Activated B cell treated with CpG ODN at 0.5 μM for 24 hours (primary cell): ENCODE measurements at regions of chr12 and their contacts with region 1.

Region 1: GRCh38 chr12:105382771-105383622 is 52.5 kb downstream of the C12orf75 start:
- DNase-seq: no peak
- ATAC-seq: peak; percentile 77
- H3K4me3 Mint-ChIP-seq: no peak overlapping the region
- H3K27ac Mint-ChIP-seq: no peak overlapping the region
- H3K4me1 Mint-ChIP-seq: no peaks in the 10 kb centered on the region
- H3K27me3 Mint-ChIP-seq: no peaks in the 10 kb centered on the region
- CTCF ChIP-seq: no peak

Region 2: GRCh38 chr12:103915306-103915705 is 1467.7 kb before region 1 on chr12:
- CTCF ChIA-PET with region 1: no interaction called
- POLR2A ChIA-PET with region 1: no interaction called
- intact Hi-C with region 1: no loop called
- DNase-seq: no peak
- ATAC-seq: no peak
- H3K4me3 Mint-ChIP-seq: no peak overlapping the region
- H3K27ac Mint-ChIP-seq: no peak overlapping the region
- H3K4me1 Mint-ChIP-seq: no peaks in the 10 kb centered on the region
- H3K27me3 Mint-ChIP-seq: no peaks in the 10 kb centered on the region
- CTCF ChIP-seq: no peak

Region 3: DNA sequence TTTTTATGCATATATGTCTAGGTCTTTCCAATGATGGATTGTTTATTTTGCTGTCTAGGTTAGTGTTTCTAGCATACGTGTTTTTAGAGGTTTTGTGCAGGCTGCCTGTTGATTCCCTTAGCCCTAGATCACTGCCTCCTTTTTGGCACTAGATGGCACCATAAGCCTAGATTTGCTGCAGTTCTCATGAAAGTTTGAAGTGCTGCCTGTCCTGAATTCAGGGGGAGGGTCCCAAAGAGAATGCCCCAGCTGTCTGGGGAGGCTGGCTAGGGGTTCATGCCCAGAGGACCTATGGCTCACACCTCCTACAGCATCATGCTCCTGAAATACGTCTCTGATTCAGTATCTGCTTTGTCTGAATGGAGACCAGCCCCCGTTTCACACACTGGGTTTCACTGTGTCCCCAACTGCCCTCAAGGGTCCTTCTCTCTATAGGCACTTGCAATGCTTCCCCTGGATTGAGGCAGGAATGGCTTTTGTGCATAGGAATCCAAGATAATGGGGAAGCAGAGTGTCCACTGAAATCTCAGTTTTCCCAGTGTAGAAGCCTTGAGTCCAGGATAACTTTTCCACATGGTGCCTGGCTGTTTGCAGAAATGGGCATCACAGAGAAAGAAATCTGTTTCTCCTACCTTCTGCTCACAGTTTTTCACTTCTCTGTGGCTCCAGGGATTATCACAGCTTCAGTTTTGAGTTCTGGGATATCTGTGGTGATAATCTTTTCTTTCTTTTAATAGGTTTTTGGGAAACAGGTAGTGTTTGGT is 1181.6 kb before region 1 on chr12:
- CTCF ChIA-PET with region 1: interaction called, 5 read pairs
- POLR2A ChIA-PET with region 1: no interaction called
- intact Hi-C with region 1: loop called (anchors 1 kb)
- DNase-seq: peak; percentile 20
- ATAC-seq: peak; percentile 62
- H3K4me3 Mint-ChIP-seq: no peak overlapping the region
- H3K27ac Mint-ChIP-seq: no peak overlapping the region
- H3K4me1 Mint-ChIP-seq: peaks cover 2% of the 10 kb centered on the region
- H3K27me3 Mint-ChIP-seq: peaks cover 12% of the 10 kb centered on the region
- CTCF ChIP-seq: peak; percentile 31

Region 4: DNA sequence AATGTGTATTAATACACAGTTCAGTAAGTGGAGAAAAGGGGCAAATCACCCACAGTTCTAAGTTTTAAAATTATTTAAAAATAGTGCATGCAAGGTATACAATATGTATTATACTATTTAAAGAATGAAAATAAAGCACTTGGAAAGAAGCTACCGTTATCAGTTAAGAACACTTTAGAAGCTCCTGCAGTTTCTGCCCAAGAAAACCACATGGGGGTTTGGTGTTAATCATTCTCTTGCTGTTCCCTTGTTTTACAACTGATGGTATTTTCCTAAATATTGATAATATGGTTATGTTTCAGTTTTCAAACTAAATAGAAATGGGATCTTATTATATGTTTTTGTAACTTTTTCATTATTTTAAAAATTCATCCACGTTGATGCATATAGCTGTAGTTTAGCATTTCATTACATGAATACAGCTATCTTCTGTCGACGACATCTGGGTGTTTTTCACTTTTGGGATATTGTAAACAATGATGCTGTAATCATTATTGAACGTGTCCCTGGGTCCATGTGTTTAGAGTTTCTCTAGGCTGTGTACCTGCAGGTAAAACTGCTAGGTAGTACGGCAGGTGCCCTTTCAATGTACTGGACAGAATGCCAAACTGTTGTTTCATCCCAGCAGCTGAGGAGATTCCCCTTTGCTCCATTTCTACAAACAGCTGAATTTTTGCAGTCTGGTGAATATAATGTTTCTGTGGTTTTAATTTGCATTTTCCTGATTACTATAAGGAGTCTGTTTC is 211.1 kb before region 1 on chr12:
- CTCF ChIA-PET with region 1: no interaction called
- POLR2A ChIA-PET with region 1: no interaction called
- intact Hi-C with region 1: loop called (anchors 2 kb)
- DNase-seq: no peak
- ATAC-seq: no peak
- H3K4me3 Mint-ChIP-seq: no peak overlapping the region
- H3K27ac Mint-ChIP-seq: peak overlapping the region; percentile 4
- H3K4me1 Mint-ChIP-seq: no peaks in the 10 kb centered on the region
- H3K27me3 Mint-ChIP-seq: no peaks in the 10 kb centered on the region
- CTCF ChIP-seq: no peak

Region 5: GRCh38 chr12:105235732-105236476 is 147.1 kb before region 1 on chr12 and contains the start of gene APPL2:
- CTCF ChIA-PET with region 1: interaction called, 9 read pairs
- POLR2A ChIA-PET with region 1: interaction called, 4 read pairs
- intact Hi-C with region 1: loop called (anchors 1 kb)
- DNase-seq: peak; percentile 79
- ATAC-seq: peak; percentile 82
- H3K4me3 Mint-ChIP-seq: peak within 1 kb of the TSS; percentile 88
- H3K27ac Mint-ChIP-seq: peak within 1 kb of the TSS; percentile 91
- H3K4me1 Mint-ChIP-seq: peaks cover 39% of the 10 kb centered on the region
- H3K27me3 Mint-ChIP-seq: no peaks in the 10 kb centered on the region
- CTCF ChIP-seq: no peak
- total RNA-seq, gene APPL2: 22.0 and 30.7 TPM in 2 replicates

Region 6: GRCh38 chr12:105279460-105280056 is 103.4 kb before region 1 on chr12:
- CTCF ChIA-PET with region 1: interaction called, 9 read pairs
- POLR2A ChIA-PET with region 1: no interaction called
- intact Hi-C with region 1: loop called (anchors 1 kb)
- DNase-seq: no peak
- ATAC-seq: peak; percentile 54
- H3K4me3 Mint-ChIP-seq: no peak overlapping the region
- H3K27ac Mint-ChIP-seq: no peak overlapping the region
- H3K4me1 Mint-ChIP-seq: no peaks in the 10 kb centered on the region
- H3K27me3 Mint-ChIP-seq: peaks cover 3% of the 10 kb centered on the region
- CTCF ChIP-seq: no peak

Region 7: DNA sequence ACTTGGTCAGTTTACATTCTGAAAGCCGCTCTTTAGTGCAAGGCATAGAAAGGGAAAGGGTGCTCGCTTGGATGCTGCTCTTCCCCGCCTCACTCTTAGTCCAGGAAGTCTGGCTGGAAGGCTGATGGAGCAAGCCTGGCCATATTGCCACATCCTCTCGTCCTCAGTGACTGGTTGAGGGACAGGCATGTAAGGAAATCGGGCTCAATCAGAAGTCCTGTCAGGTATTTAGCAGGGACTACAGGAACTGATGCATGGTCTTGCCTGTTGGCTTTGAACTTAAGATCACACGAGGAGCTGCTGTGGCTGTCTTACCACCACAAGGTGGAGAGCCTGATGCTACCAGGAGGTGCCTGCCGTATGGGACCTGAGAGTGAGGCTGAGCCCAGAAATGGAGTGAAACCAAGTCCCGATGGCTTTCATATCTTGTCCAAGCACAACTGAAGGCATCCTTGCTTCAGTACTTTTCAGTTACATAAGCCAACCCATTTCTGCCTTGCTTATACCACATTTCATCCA is 63.2 kb before region 1 on chr12:
- CTCF ChIA-PET with region 1: interaction called, 19 read pairs
- POLR2A ChIA-PET with region 1: no interaction called
- intact Hi-C with region 1: loop called (anchors 1 kb)
- DNase-seq: no peak
- ATAC-seq: no peak
- H3K4me3 Mint-ChIP-seq: no peak overlapping the region
- H3K27ac Mint-ChIP-seq: no peak overlapping the region
- H3K4me1 Mint-ChIP-seq: no peaks in the 10 kb centered on the region
- H3K27me3 Mint-ChIP-seq: no peaks in the 10 kb centered on the region
- CTCF ChIP-seq: no peak

Region 8: DNA sequence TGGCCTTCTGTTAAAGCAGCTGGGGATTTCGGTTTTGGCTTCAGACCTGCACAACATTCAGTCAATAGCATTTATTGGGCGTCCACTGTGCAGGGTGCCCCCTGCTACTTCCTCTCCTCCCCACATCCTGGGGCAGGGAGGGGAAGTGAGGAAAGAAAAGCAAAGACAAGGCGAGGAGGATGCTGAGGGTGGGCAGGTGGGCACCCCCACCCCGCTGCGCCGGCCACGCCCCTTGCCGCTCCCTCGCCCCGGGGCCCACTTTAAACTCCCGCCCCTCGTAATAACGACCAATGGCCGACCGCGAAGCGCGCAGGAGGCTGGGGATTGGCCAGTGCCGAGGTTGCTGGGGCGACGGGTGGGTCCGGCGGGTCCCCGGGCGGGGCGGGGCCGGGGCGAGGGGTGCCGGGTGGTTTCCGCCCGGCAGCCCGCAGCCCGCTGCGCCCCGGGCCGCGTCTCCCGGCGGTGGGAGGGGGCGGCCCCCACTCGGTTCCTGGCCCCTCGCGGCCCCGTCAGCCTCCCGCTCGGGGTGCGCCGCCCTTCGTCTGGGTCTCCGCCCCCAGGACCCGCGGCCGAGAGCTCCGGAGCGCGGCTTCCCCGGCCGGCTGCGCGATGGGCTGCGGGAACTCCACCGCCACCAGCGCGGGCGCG is 52.6 kb before region 1 on chr12 and contains the start of gene C12orf75:
- CTCF ChIA-PET with region 1: no interaction called
- POLR2A ChIA-PET with region 1: no interaction called
- intact Hi-C with region 1: loop called (anchors 2 kb)
- DNase-seq: peak; percentile 82
- ATAC-seq: peak; percentile 94
- H3K4me3 Mint-ChIP-seq: peak within 1 kb of the TSS; percentile 86
- H3K27ac Mint-ChIP-seq: peak within 1 kb of the TSS; percentile 76
- H3K4me1 Mint-ChIP-seq: peaks cover 47% of the 10 kb centered on the region
- H3K27me3 Mint-ChIP-seq: no peaks in the 10 kb centered on the region
- CTCF ChIP-seq: no peak
- total RNA-seq, gene C12orf75: 37.1 and 40.8 TPM in 2 replicates

Region 9: DNA sequence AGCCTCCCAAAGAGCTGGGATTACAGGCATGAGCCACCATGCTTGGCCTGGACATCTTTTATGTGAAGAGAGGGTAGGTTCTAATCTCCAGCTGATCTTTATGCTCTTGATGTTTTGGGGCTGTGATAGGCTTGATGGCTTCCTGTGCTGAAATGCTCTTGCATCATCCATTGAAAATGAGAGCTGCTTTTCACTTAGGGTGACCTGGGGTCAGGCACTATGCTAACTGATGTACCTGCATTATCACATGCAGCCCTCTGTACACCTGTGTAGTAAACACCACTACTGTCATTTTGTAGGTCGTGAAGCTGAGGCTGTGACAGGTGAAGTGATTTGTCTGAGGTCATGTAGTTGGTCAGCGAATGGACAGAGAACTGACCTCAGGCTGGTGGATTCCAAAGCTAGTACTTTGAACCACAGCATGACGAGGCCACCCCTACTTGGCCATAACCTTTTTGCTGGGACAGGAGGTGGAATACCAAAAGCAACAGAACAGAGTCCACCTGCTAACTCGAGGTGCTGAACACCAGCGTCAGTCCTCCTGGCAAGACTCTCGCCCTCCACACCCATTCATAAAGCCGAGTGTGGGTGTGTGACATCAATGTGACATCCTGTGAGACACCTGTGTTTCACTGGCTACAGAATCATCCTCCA is 16.6 kb after region 1 on chr12:
- CTCF ChIA-PET with region 1: no interaction called
- POLR2A ChIA-PET with region 1: no interaction called
- intact Hi-C with region 1: no loop called
- DNase-seq: no peak
- ATAC-seq: no peak
- H3K4me3 Mint-ChIP-seq: no peak overlapping the region
- H3K27ac Mint-ChIP-seq: no peak overlapping the region
- H3K4me1 Mint-ChIP-seq: no peaks in the 10 kb centered on the region
- H3K27me3 Mint-ChIP-seq: no peaks in the 10 kb centered on the region
- CTCF ChIP-seq: no peak

Region 10: DNA sequence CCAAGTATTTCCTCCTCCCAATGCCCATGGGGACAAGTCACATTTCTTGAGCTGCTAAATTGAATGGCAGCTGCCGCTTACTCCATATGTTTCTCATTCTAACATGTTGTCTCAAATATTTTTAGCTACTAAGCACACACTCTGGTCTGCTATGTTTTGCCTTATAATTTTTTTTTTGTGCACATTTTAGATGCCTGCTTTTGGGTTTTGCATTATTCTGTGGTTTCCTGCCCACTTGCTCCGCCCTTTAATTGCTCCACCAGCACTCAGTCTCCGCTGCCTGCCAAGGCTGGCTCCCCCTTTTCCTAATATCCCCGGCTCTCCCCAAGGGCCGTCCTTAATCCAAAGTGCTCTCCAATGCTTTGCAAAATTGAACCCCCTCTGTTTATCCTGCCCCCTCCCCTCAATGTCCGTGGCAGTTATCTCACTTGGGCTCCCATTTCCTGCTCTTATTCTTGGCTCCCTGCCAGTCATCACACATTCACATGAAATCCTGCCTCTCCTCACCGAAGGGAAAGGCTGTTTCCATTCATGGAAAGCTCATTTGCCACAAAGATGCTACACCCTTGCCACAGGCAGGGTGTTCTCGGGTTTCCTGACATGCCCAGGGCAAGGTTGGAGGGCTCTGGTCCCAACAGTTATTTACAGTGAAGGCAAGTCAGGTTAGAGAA is 26.9 kb after region 1 on chr12:
- CTCF ChIA-PET with region 1: no interaction called
- POLR2A ChIA-PET with region 1: no interaction called
- intact Hi-C with region 1: no loop called
- DNase-seq: no peak
- ATAC-seq: no peak
- H3K4me3 Mint-ChIP-seq: no peak overlapping the region
- H3K27ac Mint-ChIP-seq: no peak overlapping the region
- H3K4me1 Mint-ChIP-seq: peaks cover 7% of the 10 kb centered on the region
- H3K27me3 Mint-ChIP-seq: no peaks in the 10 kb centered on the region
- CTCF ChIP-seq: no peak